Ascending aorta (tissue), 2 donors: ENCODE measurements at regions of chr2 and their contacts with region 1.

Region 1: DNA sequence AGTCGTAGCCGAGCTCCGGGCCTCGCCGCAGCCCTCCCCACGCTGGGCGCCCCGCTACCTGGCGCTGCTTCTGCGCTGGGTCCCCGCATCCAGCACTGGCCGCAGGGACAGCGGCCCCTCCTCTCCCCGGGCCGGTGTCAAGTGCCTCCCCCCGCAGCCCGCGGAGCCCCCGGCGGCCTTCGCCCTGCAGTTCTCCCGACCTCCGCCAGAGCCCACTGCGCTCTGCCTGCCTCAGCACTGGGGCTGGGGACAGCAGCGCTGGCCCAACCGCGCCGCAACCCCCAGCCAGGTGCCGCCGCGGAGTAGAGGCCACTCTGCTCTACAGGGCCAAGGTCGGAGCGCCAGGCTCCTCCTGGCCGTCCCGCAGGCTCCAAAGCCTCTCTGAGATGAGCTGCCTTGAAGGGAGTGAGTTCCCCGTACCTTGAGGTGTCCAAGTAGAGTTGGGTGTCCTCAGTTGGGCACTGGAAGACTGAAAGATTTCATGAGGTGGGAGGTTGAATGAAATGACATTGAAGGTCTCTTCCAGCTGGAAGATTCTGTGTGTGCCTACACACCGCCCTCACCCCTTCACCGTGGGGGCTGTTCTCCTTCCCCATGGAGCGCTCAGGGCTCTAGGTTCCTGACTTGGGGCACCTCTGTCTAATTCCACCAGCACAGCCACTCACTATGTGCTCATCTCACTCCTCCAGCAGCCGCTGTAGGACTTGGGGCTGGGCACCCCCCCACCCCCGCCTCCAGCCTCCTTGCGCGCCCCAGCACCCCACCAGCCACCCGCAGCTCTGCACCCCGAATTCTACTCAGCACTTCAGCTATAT is 854 bp upstream of the DNMT3A start:
- DNase-seq: peak; percentile 44 to 89
- H3K4me3 ChIP-seq: peak overlapping the region; percentile 90 to 95
- H3K27ac ChIP-seq: peak overlapping the region; percentile 34 to 84
- H3K4me1 ChIP-seq: peaks cover 3 to 17% of the 10 kb centered on the region in 2 donors
- H3K27me3 ChIP-seq: no peaks in the 10 kb centered on the region
- CTCF ChIP-seq: peak; percentile 99

Region 2: GRCh38 chr2:25252281-25253105 is 90.1 kb before region 1 on chr2:
- intact Hi-C with region 1: loop called (anchors 5 kb)
- DNase-seq: peak in 1 of 2 donors; percentile 71
- H3K4me3 ChIP-seq: peak overlapping the region; percentile 73 to 75
- H3K27ac ChIP-seq: peak overlapping the region; percentile 67 to 77
- H3K4me1 ChIP-seq: peaks cover 6 to 21% of the 10 kb centered on the region in 2 donors
- H3K27me3 ChIP-seq: no peaks in the 10 kb centered on the region
- CTCF ChIP-seq: no peak

Region 3: DNA sequence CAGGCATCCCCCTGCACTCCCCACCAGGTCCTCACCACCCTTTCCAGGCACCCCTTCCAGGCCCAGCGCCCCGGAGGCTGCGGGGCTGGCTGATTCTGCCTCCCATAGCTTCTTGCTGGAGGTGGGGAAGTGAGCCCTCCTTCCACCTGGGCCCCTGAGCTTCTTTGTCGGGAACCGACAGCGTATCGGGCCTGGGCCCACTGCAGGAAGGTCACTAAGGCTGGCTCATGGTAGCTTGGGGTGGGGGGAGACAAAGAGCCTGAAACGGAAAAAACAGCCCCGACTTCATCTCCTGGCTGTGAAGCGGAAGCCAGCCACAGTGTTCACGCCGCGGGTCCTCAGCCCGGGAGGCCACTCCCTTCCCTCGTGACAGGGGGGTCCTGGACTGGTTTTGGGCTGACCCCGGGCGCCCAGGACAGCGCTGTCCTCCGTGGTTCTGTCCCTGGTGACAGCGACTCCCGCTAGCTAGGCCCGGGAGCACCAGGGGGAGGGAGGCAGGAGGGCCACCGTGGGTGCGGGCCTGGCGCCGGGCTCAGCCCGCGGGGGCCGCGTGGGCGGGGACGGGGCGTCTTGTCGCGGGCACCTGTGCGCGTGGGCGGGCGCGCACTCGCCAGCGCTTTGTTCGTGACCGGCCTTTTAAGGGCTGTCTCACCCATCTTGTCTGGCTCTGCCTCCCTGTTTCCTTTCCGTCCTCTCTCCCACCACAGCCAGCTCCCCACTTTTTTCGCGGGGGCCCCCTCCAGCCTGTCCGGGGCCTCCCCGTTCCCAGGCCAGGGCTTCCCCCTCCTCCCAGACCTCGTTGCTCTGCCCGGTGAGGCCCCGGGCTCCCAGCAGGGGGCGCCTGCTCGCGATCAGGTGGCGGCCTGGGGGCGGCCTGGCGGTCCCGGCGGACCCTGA is 65.8 kb before region 1 on chr2:
- intact Hi-C with region 1: loop called (anchors 1 kb)
- DNase-seq: peak in 1 of 2 donors; percentile 84
- H3K4me3 ChIP-seq: peak overlapping the region; percentile 47 to 58
- H3K27ac ChIP-seq: peak overlapping the region; percentile 70 to 84
- H3K4me1 ChIP-seq: peaks cover 0 to 10% of the 10 kb centered on the region in 2 donors
- H3K27me3 ChIP-seq: no peaks in the 10 kb centered on the region
- CTCF ChIP-seq: peak; percentile 77 to 93 (median 85)

Region 4: DNA sequence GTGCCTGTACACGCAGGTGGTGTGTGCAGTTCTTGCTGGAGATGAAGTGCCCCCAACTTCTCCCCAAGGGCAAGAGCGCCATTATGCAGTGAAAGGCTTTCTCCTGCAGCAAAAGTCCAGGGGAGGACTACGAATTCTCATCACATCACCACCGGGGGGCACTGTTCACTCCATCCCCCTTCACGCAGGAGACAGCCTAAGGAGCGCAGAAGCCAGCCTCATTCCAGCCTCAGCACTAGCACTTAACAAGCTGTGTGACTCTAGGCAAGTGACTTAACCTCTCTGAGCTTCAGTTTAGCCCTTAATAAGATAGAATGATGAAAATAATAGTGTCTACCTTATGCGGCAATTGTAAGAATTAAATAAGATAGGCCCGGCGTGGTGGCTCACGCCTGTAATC is 33.2 kb before region 1 on chr2:
- intact Hi-C with region 1: loop called (anchors 5 kb)
- DNase-seq: no peak
- H3K4me3 ChIP-seq: no peak overlapping the region
- H3K27ac ChIP-seq: no peak overlapping the region
- H3K4me1 ChIP-seq: peaks cover 12 to 46% of the 10 kb centered on the region in 2 donors
- H3K27me3 ChIP-seq: no peaks in the 10 kb centered on the region
- CTCF ChIP-seq: peak; percentile 30 to 43 (median 31)

Region 5: DNA sequence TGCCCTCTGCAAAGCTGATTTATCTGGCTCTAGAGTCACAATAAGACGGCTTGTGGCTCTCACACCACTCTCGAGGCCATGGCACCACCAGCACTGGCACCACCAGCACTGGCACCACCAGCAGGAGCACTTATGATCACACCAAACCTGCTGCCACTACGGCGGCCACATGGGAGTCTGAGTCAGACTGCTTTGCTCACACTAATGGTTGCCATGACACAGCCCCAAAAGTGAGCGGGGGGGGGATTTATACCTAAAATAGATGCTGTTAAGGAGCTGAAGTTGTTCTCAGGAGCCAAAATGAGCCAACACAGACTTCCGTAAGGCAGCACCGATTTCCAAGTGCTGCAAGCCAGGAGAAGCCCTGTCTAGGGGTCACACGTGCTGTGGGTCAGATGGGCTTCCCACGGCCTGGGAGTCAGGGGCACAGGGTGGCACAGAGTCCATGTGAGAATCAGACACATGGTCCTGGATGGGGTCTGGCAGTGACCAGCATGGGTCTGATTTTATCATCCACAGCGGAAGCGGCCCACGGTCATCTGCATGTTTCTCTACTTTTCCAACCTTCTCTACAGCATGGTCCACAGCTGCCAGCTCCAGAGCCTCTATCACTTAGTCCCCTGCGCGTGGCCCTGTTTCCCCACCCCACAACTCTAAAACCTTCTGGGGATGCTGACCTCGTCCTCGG is 17.5 kb before region 1 on chr2:
- intact Hi-C with region 1: loop called (anchors 1 kb)
- DNase-seq: peak; percentile 89 to 98
- H3K4me3 ChIP-seq: peak overlapping the region in 1 of 2 donors; percentile 36
- H3K27ac ChIP-seq: peak overlapping the region; percentile 80 to 86
- H3K4me1 ChIP-seq: peaks cover 8 to 40% of the 10 kb centered on the region in 2 donors
- H3K27me3 ChIP-seq: no peaks in the 10 kb centered on the region
- CTCF ChIP-seq: peak in 1 of 3 experiments; percentile 11

Region 6: GRCh38 chr2:25362049-25362433 is 19.5 kb after region 1 on chr2:
- intact Hi-C with region 1: loop called (anchors 2 kb)
- DNase-seq: peak; percentile 82 to 96
- H3K4me3 ChIP-seq: peak overlapping the region; percentile 43 to 59
- H3K27ac ChIP-seq: peak overlapping the region; percentile 4 to 34
- H3K4me1 ChIP-seq: no peaks in the 10 kb centered on the region
- H3K27me3 ChIP-seq: no peaks in the 10 kb centered on the region
- CTCF ChIP-seq: peak; percentile 89 to 98 (median 97)

Region 7: DNA sequence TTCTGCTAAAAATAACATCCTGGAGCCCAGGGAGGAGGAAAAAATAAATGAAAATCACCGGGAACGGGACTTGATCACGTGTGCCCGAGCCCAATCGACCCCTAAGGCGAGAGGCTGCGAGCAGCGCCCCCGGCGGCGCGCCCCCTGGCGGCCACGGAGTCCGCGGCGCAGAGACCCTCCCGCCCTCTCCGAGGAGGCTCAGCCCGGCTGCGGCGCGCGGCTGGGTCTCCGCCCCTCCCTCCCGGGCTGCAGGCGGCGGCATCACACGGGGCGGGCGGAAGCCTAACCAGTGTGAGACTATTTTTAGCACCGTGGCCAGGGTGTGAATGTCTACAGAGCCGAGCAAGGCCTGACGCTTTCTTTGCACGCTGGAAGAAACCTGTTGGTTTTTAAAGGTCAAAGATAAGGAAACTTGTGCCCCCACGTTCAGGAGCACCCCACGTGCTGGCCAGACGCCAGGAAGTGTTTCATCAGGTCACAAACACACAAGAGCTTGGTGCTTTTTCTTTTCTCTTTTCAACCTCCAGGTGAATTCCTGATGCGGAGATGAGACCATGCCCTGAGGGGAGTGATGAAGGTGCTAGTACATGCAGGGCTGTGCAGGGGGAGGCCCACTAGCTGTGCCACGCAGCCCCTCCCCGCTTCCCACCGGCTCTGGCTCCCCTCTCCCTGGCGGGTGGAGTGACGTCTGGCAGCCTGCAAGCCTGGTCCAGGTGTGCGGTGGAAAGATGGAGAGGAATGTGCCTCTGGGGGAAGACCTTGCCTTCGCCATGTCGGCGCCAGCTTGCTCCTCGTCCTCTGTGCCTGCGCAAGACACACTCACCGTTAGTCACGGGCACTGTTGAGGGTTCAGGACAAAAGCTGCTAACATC is 34.4 kb after region 1 on chr2:
- intact Hi-C with region 1: loop called (anchors 1 kb)
- DNase-seq: peak; percentile 57 to 92
- H3K4me3 ChIP-seq: peak overlapping the region; percentile 9 to 52
- H3K27ac ChIP-seq: peak overlapping the region in 1 of 2 donors; percentile 24
- H3K4me1 ChIP-seq: peaks cover 4 to 9% of the 10 kb centered on the region in 2 donors
- H3K27me3 ChIP-seq: no peaks in the 10 kb centered on the region
- CTCF ChIP-seq: peak; percentile 76 to 88 (median 87)